Caco-2 (cell line): ENCODE measurements at regions of chrX and their contacts with region 1.

Region 1: GRCh38 chrX:23403853-23404252 is 69.2 kb downstream of the PTCHD1 start:
- DNase-seq: peak in 1 of 2 experiments; percentile 2
- H3K4me3 ChIP-seq: no peak overlapping the region
- H3K4me3 Mint-ChIP-seq: no peak overlapping the region
- H3K27ac Mint-ChIP-seq: no peak overlapping the region
- H3K4me1 ChIP-seq: no peaks in the 10 kb centered on the region
- H3K4me1 Mint-ChIP-seq: no peaks in the 10 kb centered on the region
- H3K27me3 ChIP-seq: no peaks in the 10 kb centered on the region
- H3K27me3 Mint-ChIP-seq: peaks cover 3% of the 10 kb centered on the region
- CTCF ChIP-seq: peak in 1 of 2 experiments; percentile 28

Region 2: GRCh38 chrX:23554304-23554703 is 150.5 kb after region 1 on chrX:
- CTCF ChIA-PET with region 1: no interaction called
- POLR2A ChIA-PET with region 1: no interaction called
- intact Hi-C with region 1: loop called (anchors 1 kb)
- DNase-seq: peak in 1 of 2 experiments; percentile 4
- H3K4me3 ChIP-seq: no peak overlapping the region
- H3K4me3 Mint-ChIP-seq: no peak overlapping the region
- H3K27ac Mint-ChIP-seq: no peak overlapping the region
- H3K4me1 ChIP-seq: no peaks in the 10 kb centered on the region
- H3K4me1 Mint-ChIP-seq: no peaks in the 10 kb centered on the region
- H3K27me3 ChIP-seq: no peaks in the 10 kb centered on the region
- H3K27me3 Mint-ChIP-seq: peaks cover 6% of the 10 kb centered on the region
- CTCF ChIP-seq: peak; percentile 13 to 39

Region 3: DNA sequence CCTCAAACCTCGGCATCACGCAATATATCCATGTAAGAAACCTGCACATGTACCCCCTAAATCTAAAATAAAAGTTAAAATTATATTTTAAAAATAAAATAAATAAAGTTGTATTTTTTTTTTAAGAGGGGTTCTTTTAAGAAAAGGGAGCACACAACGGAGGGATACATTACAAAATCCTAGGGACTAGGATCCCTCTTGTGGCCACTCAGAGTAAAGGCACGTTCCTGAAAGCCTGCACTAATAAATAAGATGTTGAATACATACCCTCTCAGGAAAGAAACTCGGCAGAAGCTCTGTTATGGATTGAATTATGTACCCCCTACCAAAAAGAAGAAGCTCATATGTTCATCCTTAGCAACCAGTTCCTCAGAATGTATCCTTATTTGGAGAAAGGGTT is 212.5 kb after region 1 on chrX:
- CTCF ChIA-PET with region 1: no interaction called
- POLR2A ChIA-PET with region 1: no interaction called
- intact Hi-C with region 1: loop called (anchors 10 kb)
- DNase-seq: no peak
- H3K4me3 ChIP-seq: no peak overlapping the region
- H3K4me3 Mint-ChIP-seq: no peak overlapping the region
- H3K27ac Mint-ChIP-seq: no peak overlapping the region
- H3K4me1 ChIP-seq: no peaks in the 10 kb centered on the region
- H3K4me1 Mint-ChIP-seq: no peaks in the 10 kb centered on the region
- H3K27me3 ChIP-seq: no peaks in the 10 kb centered on the region
- H3K27me3 Mint-ChIP-seq: peaks cover 5% of the 10 kb centered on the region
- CTCF ChIP-seq: peak; percentile 33 to 45